ENCODE measurements at regions of chr12 and their contacts with region 1.

Region 1: DNA sequence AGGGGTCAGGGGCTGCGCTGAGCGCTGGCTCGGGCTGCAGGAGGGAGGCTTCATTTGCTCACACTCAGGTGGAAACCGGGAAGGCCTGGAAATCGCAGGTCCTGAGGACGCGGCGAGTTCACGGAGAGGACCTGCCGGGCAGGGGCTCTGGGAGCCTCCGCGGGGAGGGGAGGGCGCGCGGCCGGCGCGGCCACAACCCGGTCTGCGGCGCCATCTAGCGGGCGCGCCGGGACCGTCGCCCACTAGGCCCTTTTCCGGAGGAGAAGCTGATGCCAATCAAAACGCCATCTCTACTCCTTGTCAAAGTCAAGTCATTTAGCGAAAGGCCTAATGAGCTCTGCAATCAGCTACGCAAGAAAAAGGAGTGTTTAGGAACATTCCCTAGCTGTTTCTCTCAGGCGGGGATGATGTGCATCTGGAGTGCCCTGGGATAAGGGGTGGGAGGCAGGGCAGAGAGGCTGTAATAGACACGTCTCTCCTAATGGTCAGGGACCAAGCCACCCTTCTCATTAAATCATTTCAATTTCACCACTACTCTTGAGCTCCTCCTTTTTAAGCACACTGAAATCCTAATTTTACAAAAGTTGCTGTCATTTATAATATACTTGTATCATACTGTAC is 885.8 kb upstream of the TMEM132C start:
- DNase-seq: peak; percentile 31
- H3K4me3 ChIP-seq: peak overlapping the region; percentile 26 to 42 (median 32)
- H3K27ac ChIP-seq: no peak overlapping the region
- H3K4me1 ChIP-seq: peaks cover 5 to 7% (median 7%) of the 10 kb centered on the region in 4 donors
- H3K27me3 ChIP-seq: peaks cover 0 to 28% (median 0%) of the 10 kb centered on the region in 4 donors
- CTCF ChIP-seq: peak; percentile 67 to 89 (median 86)
- EP300 ChIP-seq: no peak
- POLR2A ChIP-seq: no peak

Region 2: GRCh38 chr12:126784328-126784921 is 596.7 kb before region 1 on chr12:
- intact Hi-C with region 1: loop called (anchors 10 kb)
- DNase-seq: peak; percentile 92
- H3K4me3 ChIP-seq: no peak overlapping the region
- H3K27ac ChIP-seq: no peak overlapping the region
- H3K4me1 ChIP-seq: no peaks in the 10 kb centered on the region
- H3K27me3 ChIP-seq: peaks cover 0 to 4% (median 0%) of the 10 kb centered on the region in 4 donors
- CTCF ChIP-seq: peak; percentile 19 to 38 (median 23)
- EP300 ChIP-seq: no peak
- POLR2A ChIP-seq: no peak

Region 3: GRCh38 chr12:127108360-127109215 is 272.6 kb before region 1 on chr12:
- intact Hi-C with region 1: loop called (anchors 2 kb)
- DNase-seq: no peak
- H3K4me3 ChIP-seq: no peak overlapping the region
- H3K27ac ChIP-seq: no peak overlapping the region
- H3K4me1 ChIP-seq: no peaks in the 10 kb centered on the region
- H3K27me3 ChIP-seq: peaks cover 0 to 21% (median 0%) of the 10 kb centered on the region in 4 donors
- CTCF ChIP-seq: peak; percentile 59 to 68 (median 64)
- EP300 ChIP-seq: no peak
- POLR2A ChIP-seq: no peak

Region 4: DNA sequence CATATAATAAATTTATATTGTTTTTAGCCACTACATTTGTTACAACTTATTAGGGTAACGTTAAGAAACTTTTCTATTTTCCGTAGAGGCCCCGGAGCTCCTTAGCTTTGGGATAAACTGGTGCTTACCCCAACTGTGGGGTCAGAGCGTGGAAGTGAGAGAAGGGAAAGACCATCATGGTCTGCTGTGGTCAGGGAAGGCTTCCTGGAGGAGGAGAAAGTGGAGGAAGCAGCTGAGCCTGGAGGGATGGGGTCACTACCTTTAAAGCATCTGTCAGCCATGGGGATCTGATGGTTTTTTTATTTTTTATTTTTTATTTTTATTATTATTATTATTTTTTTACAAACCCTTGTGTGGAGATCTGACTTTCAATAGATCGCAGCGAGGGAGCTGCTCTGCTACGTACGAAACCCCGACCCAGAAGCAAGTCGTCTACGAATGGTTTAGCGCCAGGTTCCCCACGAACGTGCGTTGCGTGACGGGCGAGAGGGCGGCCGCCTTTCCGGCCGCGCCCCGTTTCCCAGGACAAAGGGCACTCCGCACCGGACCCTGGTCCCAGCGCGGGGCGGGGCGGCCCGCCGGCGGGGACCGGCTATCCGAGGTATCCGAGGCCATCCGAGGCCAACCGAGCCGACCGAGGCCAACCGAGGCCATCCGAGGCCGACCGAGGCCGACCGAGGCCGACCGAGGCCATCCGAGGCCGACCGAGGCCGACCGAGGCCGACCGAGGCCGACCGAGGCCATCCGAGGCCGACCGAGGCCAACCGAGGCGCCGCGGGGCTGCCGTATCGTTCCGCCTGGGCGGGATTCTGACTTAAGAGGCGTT is 215.4 kb before region 1 on chr12:
- intact Hi-C with region 1: no loop called
- DNase-seq: no peak
- H3K4me3 ChIP-seq: peak overlapping the region; percentile 55 to 59 (median 58)
- H3K27ac ChIP-seq: peak overlapping the region; percentile 56 to 78 (median 74)
- H3K4me1 ChIP-seq: peaks cover 0 to 10% (median 5%) of the 10 kb centered on the region in 4 donors
- H3K27me3 ChIP-seq: peaks cover 0 to 8% (median 0%) of the 10 kb centered on the region in 4 donors
- CTCF ChIP-seq: no peak
- EP300 ChIP-seq: no peak
- POLR2A ChIP-seq: no peak

Region 5: GRCh38 chr12:127280393-127281275 is 100.5 kb before region 1 on chr12:
- intact Hi-C with region 1: loop called (anchors 2 kb)
- DNase-seq: no peak
- H3K4me3 ChIP-seq: no peak overlapping the region
- H3K27ac ChIP-seq: no peak overlapping the region
- H3K4me1 ChIP-seq: peaks cover 0 to 21% (median 11%) of the 10 kb centered on the region in 4 donors
- H3K27me3 ChIP-seq: peaks cover 0 to 40% (median 4%) of the 10 kb centered on the region in 4 donors
- CTCF ChIP-seq: peak; percentile 74 to 94 (median 86)
- EP300 ChIP-seq: no peak
- POLR2A ChIP-seq: no peak